B cell (primary cell): ENCODE measurements at regions of chr1 and their contacts with region 1.

Region 1: DNA sequence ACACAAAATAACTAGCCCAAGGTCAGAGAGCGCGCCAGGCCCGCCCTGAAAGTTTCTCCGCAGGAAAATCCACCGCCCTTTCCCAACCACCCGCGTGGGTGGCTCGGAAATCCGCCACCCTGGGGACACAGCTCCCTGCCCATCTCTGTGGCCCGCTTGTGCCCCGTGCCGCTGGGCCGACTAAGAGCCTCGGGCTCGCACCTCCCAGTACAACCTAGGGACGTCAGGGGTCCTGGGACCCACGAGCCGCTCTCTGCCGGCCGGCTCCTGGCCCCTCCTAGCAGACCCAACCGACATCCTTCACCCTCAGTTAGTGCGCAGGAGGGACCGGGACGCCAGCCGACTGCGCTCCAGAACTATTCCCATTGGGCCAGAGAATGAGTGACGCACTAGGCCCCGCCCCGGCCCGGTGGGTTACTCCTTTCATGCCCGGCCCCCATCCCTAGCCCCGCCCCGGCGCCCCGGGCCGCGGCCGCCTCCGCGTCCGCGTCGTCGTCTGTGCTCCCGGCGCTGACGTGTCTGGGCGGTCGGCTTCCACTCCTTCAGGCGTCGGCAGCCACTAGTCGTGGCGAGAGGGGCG is 395 bp upstream of the UAP1 start:
- DNase-seq: peak; percentile 97
- ATAC-seq: peak; percentile 94
- H3K4me3 ChIP-seq: peak overlapping the region; percentile 39 to 87 (median 81)
- H3K4me3 Mint-ChIP-seq: peak overlapping the region; percentile 97
- H3K27ac ChIP-seq: peak overlapping the region; percentile 84 to 91
- H3K27ac Mint-ChIP-seq: peak overlapping the region; percentile 97
- H3K4me1 ChIP-seq: peaks cover 11 to 15% of the 10 kb centered on the region in 2 donors
- H3K4me1 Mint-ChIP-seq: peaks cover 27% of the 10 kb centered on the region
- H3K27me3 ChIP-seq: peaks cover 0 to 5% (median 0%) of the 10 kb centered on the region in 4 experiments
- H3K27me3 Mint-ChIP-seq: no peaks in the 10 kb centered on the region
- CTCF ChIP-seq: no peak

Region 2: DNA sequence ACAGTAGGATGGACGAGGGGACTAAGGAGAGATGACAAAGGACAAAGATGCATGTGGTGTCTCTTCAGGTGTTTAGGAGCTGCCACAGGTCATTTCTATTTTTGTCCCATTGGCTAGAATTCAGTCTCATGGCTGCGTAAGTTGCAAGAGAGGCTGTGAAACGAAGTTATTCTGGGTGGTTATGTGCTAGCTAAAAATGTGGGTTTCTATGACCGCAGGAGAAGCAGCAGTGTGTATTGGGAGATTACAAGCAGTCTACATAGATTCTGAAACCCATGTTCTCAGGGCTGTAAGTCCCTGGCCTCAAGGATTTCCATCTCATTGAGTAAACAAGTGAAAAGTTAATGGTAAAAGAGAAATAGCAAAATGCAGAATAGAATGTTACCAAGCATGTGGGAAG is 295.1 kb before region 1 on chr1:
- CTCF ChIA-PET with region 1: no interaction called
- POLR2A ChIA-PET with region 1: no interaction called
- intact Hi-C with region 1: no loop called
- DNase-seq: no peak
- ATAC-seq: no peak
- H3K4me3 ChIP-seq: no peak overlapping the region
- H3K4me3 Mint-ChIP-seq: no peak overlapping the region
- H3K27ac ChIP-seq: no peak overlapping the region
- H3K27ac Mint-ChIP-seq: no peak overlapping the region
- H3K4me1 ChIP-seq: no peaks in the 10 kb centered on the region
- H3K4me1 Mint-ChIP-seq: no peaks in the 10 kb centered on the region
- H3K27me3 ChIP-seq: no peaks in the 10 kb centered on the region
- H3K27me3 Mint-ChIP-seq: peaks cover 31% of the 10 kb centered on the region
- CTCF ChIP-seq: no peak

Region 3: DNA sequence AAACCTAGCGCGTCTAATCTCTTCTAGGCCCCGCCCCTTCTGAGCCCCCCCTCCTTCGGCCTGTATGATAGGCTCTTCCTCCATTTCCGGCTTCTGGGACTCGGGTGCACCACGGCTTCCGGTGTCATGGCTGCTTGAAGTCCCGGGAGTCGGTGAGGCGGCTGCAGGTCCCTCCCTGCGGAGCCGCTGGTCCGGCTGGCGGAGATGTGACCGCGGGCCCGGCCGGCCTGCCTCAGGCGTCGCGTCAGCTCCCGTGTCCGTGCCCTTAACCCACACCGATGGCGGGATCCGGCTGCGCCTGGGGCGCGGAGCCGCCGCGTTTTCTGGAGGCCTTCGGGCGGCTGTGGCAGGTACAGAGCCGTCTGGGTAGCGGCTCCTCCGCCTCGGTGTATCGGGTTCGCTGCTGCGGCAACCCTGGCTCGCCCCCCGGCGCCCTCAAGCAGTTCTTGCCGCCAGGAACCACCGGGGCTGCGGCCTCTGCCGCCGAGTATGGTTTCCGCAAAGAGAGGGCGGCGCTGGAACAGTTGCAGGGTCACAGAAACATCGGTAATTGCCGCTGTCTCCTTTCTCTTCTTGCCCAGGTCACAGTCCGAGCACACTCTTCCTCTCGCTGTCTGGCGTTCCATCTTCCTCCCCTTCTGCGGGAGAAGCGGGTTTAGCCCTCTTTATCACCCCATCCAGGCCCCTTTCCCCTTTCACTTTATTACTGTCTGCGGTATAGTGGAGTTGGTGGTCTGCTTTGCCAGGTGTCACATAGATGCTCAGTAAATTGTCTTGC is 63.2 kb before region 1 on chr1 and contains the start of gene UHMK1:
- CTCF ChIA-PET with region 1: no interaction called
- POLR2A ChIA-PET with region 1: interaction called, 4 read pairs
- intact Hi-C with region 1: loop called (anchors 1 kb)
- DNase-seq: peak; percentile 94
- ATAC-seq: peak; percentile 95
- H3K4me3 ChIP-seq: peak within 1 kb of the TSS; percentile 71 to 95 (median 86)
- H3K4me3 Mint-ChIP-seq: peak within 1 kb of the TSS; percentile 98
- H3K27ac ChIP-seq: peak within 1 kb of the TSS; percentile 89 to 94
- H3K27ac Mint-ChIP-seq: peak within 1 kb of the TSS; percentile 96
- H3K4me1 ChIP-seq: peaks cover 15 to 16% of the 10 kb centered on the region in 2 donors
- H3K4me1 Mint-ChIP-seq: peaks cover 39% of the 10 kb centered on the region
- H3K27me3 ChIP-seq: no peaks in the 10 kb centered on the region
- H3K27me3 Mint-ChIP-seq: no peaks in the 10 kb centered on the region
- CTCF ChIP-seq: no peak
- total RNA-seq, gene UHMK1: 67.6 and 69.2 TPM in 2 replicates

Region 4: GRCh38 chr1:162530307-162530987 is 30.7 kb before region 1 on chr1:
- CTCF ChIA-PET with region 1: no interaction called
- POLR2A ChIA-PET with region 1: no interaction called
- intact Hi-C with region 1: loop called (anchors 1 kb)
- DNase-seq: peak; percentile 81
- ATAC-seq: peak; percentile 93
- H3K4me3 ChIP-seq: no peak overlapping the region
- H3K4me3 Mint-ChIP-seq: no peak overlapping the region
- H3K27ac ChIP-seq: peak overlapping the region; percentile 59 to 77
- H3K27ac Mint-ChIP-seq: peak overlapping the region; percentile 69
- H3K4me1 ChIP-seq: peaks cover 17 to 20% of the 10 kb centered on the region in 2 donors
- H3K4me1 Mint-ChIP-seq: peaks cover 20% of the 10 kb centered on the region
- H3K27me3 ChIP-seq: no peaks in the 10 kb centered on the region
- H3K27me3 Mint-ChIP-seq: no peaks in the 10 kb centered on the region
- CTCF ChIP-seq: no peak

Region 5: DNA sequence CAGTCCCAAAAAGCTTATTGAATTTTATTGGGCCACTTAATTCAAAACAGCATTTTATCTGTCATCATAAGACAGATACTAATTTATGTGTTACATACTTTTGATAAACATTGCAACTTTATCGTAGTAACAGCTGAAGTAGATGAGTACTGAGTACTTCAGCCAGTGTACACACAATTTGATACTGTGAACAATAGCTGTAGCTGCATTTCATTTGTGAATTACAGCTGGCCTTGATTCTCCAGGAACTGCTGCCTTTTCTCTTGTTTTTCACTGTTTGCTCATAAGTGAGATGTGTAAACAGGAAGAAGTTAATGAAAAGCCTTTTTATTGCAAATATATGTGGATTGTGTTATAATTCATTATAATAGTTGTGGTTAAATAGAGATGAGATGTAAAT is 10.6 kb after region 1 on chr1:
- CTCF ChIA-PET with region 1: no interaction called
- POLR2A ChIA-PET with region 1: no interaction called
- intact Hi-C with region 1: no loop called
- DNase-seq: no peak
- ATAC-seq: no peak
- H3K4me3 ChIP-seq: no peak overlapping the region
- H3K4me3 Mint-ChIP-seq: no peak overlapping the region
- H3K27ac ChIP-seq: no peak overlapping the region
- H3K27ac Mint-ChIP-seq: no peak overlapping the region
- H3K4me1 ChIP-seq: no peaks in the 10 kb centered on the region
- H3K4me1 Mint-ChIP-seq: no peaks in the 10 kb centered on the region
- H3K27me3 ChIP-seq: no peaks in the 10 kb centered on the region
- H3K27me3 Mint-ChIP-seq: no peaks in the 10 kb centered on the region
- CTCF ChIP-seq: no peak